PC-9 (cell line): ENCODE measurements at regions of chr11 and their contacts with region 1.

Region 1: DNA sequence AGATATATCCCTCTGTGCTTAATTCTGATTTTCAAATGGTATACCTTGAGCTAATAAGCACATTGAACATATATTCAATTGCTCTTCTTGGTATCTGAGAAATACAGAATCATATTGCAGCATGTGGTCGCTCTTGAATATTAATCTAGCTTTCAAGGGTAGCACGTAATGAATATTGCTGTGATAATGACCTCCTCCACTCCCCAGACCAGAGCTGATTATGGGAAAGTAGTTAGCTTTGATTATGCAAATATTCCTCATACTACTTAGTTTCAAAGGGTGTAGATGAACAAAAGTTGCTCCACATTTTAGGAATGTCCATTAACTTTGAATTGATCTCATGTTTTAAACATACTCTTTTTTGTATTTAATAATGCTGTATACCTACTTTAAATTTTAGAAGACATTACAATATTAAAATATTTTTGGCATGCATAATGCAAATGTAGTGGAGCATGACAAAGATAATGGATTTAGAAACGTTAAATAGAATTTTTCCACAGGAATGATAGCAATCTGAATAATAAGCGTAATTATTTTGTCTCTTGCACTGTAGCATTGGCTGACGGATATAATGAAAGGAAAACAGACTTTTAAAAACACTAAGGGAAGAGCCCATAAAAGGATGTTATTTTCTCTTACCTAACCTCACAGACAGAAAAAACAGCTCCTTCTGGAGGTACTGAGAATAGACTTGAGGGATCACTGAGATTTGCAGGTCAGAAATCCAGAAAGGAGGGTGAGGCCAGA is 27.2 kb downstream of the KBTBD3 start:
- DNase-seq: no peak
- H3K4me3 ChIP-seq: no peak overlapping the region
- H3K27ac ChIP-seq: no peak overlapping the region
- H3K4me1 ChIP-seq: peaks cover 5% of the 10 kb centered on the region; the same call in 1 of the 2 replicates
- H3K27me3 ChIP-seq: no peaks in the 10 kb centered on the region
- CTCF ChIP-seq: no peak

Region 2: DNA sequence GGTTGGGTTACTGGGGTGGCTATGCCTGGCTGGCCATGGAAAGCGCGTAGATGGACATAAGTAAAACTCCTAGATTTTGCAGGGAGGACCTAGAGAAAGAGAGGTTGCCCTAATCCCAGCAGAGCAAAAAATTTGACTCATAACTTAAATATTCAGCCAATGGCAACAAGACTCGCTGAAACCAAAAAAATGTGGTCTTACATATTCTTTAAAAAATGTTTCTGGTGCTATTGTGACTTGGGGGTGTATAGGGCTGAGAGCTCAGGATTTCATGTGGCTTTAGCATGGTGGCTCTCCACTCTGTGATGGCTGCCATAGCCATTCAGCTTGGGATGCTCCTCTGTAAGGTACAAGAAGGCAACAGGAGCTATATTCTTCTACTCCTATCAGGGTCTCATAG is 1858.8 kb before region 1 on chr11:
- CTCF ChIA-PET with region 1: no interaction called
- POLR2A ChIA-PET with region 1: interaction called, 28 read pairs
- intact Hi-C with region 1: no loop called
- DNase-seq: no peak
- H3K4me3 ChIP-seq: no peak overlapping the region
- H3K27ac ChIP-seq: no peak overlapping the region
- H3K4me1 ChIP-seq: no peaks in the 10 kb centered on the region
- H3K27me3 ChIP-seq: no peaks in the 10 kb centered on the region
- CTCF ChIP-seq: no peak